Mammary epithelial cell (primary cell): ENCODE measurements at regions of chr2 and their contacts with region 1.

Region 1: GRCh38 chr2:72745679-72746368 is 80.0 kb downstream of the EXOC6B start:
- DNase-seq: peak; percentile 46
- H3K4me3 ChIP-seq: no peak overlapping the region
- H3K27ac ChIP-seq: no peak overlapping the region
- H3K4me1 ChIP-seq: peaks cover 6% of the 10 kb centered on the region
- H3K27me3 ChIP-seq: no peaks in the 10 kb centered on the region
- CTCF ChIP-seq: peak; percentile 68 to 76

Region 2: DNA sequence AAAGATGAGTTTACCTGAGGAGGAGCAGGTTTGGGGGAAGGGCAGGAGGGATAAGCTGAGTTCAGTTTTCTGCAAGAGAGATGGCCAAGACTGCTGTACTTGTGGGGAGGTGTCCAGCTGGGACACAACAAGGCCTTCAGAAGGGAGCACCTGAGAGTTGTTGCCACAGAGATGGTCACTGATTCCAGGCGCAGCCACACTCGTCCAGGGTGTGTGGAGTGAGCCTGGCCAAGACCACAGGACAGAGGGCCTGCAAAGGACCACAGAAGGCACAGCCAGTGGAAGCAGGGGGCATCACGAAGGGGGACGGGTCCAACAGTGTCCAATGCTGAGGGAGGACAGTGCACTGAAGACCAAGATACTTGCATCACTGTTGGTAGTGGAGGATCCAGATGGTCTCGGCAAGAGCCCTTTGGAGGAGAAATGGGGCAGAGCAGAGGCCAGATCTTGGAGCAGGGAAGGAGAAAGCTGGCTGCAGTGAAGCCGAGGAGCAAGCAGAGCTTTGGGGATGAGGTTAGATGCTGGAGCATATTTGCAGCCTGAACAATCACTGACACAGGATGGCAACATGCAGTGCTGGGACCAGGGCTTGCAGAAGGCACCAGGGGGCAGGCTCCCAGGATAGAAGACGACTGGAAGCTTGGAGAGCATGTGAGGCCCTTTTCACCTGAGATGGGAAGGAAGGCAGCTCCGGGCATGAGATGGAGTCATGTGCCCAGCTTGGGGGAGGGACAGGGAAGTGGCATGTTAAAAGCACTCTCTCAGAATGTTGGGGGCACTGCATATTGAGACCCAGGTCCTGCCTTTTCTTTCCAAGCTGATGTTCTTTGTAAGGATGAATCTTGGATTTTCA is 812.1 kb before region 1 on chr2:
- CTCF ChIA-PET with region 1: no interaction called
- dilution Hi-C with region 1: no loop called
- in situ Hi-C with region 1: loop called in 1 of 2 experiments (anchors 25 kb)
- intact Hi-C with region 1: loop called (anchors 10 kb)
- DNase-seq: peak; percentile 15
- H3K4me3 ChIP-seq: no peak overlapping the region
- H3K27ac ChIP-seq: no peak overlapping the region
- H3K4me1 ChIP-seq: no peaks in the 10 kb centered on the region
- H3K27me3 ChIP-seq: no peaks in the 10 kb centered on the region
- CTCF ChIP-seq: peak; percentile 26 to 44

Region 3: GRCh38 chr2:72332720-72333119 is 413.1 kb before region 1 on chr2:
- CTCF ChIA-PET with region 1: no interaction called
- dilution Hi-C with region 1: no loop called
- in situ Hi-C with region 1: no loop called
- intact Hi-C with region 1: no loop called
- DNase-seq: no peak
- H3K4me3 ChIP-seq: no peak overlapping the region
- H3K27ac ChIP-seq: no peak overlapping the region
- H3K4me1 ChIP-seq: no peaks in the 10 kb centered on the region
- H3K27me3 ChIP-seq: no peaks in the 10 kb centered on the region
- CTCF ChIP-seq: no peak

Region 4: DNA sequence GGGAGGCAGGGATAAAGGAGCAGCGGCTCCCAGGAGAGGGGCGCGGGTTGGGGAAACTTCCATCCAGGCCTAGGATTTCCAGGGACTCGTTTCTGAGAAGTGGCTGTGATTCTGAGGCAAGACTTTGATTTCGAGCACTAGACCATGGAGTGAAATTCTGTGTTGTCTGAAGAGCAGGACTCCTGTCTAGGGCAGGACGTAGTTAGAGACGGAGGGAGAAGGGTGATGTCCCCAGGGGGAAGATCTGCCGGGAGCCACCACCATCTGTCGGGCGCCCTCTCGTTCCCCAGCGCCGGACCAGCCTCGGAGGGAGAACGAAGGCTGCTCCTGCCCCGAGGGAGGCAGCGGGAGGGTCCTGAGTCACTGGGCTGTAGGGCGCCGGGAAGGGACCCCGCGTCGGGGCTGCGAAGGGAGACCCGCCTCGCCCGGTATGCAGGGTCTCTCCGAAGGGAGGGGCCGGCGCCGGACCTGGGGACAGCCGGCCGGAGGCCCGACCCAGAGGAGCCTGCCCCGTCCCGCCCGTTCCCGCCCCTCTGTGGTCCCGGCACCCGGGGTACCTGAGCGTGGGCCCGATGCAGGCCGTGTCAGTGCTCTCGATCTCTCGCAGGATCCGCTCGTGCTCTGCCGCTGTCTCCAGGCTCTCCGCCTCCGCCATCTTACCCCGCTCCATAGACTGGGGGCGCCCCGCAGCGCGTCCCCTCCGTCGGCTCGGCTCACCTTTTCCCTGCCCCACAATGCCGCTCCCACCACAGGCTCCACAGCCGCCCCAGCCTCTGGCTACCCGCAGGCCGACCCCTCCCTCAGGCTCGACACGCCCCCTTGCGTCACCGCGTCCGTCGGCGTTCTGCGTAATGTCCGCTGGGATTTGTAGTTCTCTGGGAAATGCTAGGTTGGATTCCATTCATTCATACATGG is 79.7 kb after region 1 on chr2 and contains the start of gene EXOC6B:
- CTCF ChIA-PET with region 1: interaction called, 15 read pairs
- dilution Hi-C with region 1: no loop called
- in situ Hi-C with region 1: no loop called
- intact Hi-C with region 1: no loop called
- DNase-seq: peak; percentile 86
- H3K4me3 ChIP-seq: peak within 1 kb of the TSS; percentile 74 to 79 (median 76)
- H3K27ac ChIP-seq: peak within 1 kb of the TSS; percentile 83
- H3K4me1 ChIP-seq: peaks cover 42% of the 10 kb centered on the region
- H3K27me3 ChIP-seq: no peaks in the 10 kb centered on the region
- CTCF ChIP-seq: no peak
- total RNA-seq, gene EXOC6B: 38.3 to 48.9 TPM